ENCODE measurements at regions of chr12 and their contacts with region 1.

Region 1: GRCh38 chr12:89019408-89020120 is 332.7 kb downstream of the DUSP6 start:
- DNase-seq: peak; percentile 46
- H3K4me3 ChIP-seq: peak overlapping the region; percentile 50
- H3K27ac ChIP-seq: no peak overlapping the region
- H3K4me1 ChIP-seq: peaks cover 12% of the 10 kb centered on the region
- H3K27me3 ChIP-seq: no peaks in the 10 kb centered on the region
- CTCF ChIP-seq: peak; percentile 93

Region 2: DNA sequence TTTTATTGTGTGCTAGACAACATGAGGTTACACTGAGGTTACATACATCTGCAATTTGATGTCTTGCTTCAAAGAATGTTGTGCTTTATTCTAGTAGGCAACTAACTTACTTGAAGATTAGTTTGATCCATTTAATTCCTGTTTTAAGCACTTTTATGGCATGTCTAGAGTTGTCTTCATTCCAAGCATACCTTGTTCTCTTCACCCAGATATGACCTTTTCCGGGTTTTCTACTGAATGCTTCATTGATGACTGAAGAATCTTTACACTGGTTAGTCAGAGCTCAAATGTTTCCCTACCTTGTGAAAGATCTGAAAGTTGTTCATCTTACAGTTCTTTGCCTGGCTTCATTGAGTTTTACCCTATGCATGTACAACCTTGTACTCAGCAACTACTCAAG is 165.3 kb before region 1 on chr12:
- intact Hi-C with region 1: no loop called
- DNase-seq: no peak
- H3K4me3 ChIP-seq: no peak overlapping the region
- H3K27ac ChIP-seq: no peak overlapping the region
- H3K4me1 ChIP-seq: no peaks in the 10 kb centered on the region
- H3K27me3 ChIP-seq: no peaks in the 10 kb centered on the region
- CTCF ChIP-seq: no peak

Region 3: GRCh38 chr12:89162704-89163261 is 143.2 kb after region 1 on chr12:
- intact Hi-C with region 1: no loop called
- DNase-seq: peak; percentile 31
- H3K4me3 ChIP-seq: no peak overlapping the region
- H3K27ac ChIP-seq: peak overlapping the region; percentile 80
- H3K4me1 ChIP-seq: peaks cover 57% of the 10 kb centered on the region
- H3K27me3 ChIP-seq: no peaks in the 10 kb centered on the region
- CTCF ChIP-seq: no peak

Region 4: GRCh38 chr12:89461649-89462612 is 442.4 kb after region 1 on chr12:
- intact Hi-C with region 1: loop called (anchors 2 kb)
- DNase-seq: no peak
- H3K4me3 ChIP-seq: peak overlapping the region; percentile 40
- H3K27ac ChIP-seq: peak overlapping the region; percentile 65
- H3K4me1 ChIP-seq: peaks cover 15% of the 10 kb centered on the region
- H3K27me3 ChIP-seq: no peaks in the 10 kb centered on the region
- CTCF ChIP-seq: peak; percentile 76

Measured in left ventricle myocardium inferior (tissue), 1 donor.